Cardiac septum (tissue), 1 donor: ENCODE measurements at regions of chr1 and their contacts with region 1.

Region 1: GRCh38 chr1:205591522-205592351 is 40.1 kb downstream of the ELK4 start:
- DNase-seq: peak; percentile 93

Region 2: DNA sequence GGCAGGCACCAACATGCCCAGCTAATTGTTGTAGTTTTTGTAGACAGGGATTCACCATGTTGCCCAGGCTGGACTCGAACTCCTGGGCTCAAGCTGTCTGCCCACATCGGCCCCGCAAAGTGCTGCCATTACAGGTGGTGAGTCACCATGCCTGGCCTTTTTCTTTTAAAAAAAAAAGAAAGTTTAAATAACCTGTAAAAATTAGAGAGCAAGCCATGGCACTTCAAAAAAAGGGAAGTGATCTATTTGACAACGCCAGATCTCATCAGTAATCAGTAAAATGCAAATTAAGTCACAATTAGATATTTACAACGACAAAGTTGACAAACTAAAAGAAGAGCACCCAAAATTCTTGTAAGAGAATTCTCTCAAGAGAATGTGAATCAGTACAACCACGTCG is 467.0 kb before region 1 on chr1:
- intact Hi-C with region 1: no loop called
- DNase-seq: no peak

Region 3: DNA sequence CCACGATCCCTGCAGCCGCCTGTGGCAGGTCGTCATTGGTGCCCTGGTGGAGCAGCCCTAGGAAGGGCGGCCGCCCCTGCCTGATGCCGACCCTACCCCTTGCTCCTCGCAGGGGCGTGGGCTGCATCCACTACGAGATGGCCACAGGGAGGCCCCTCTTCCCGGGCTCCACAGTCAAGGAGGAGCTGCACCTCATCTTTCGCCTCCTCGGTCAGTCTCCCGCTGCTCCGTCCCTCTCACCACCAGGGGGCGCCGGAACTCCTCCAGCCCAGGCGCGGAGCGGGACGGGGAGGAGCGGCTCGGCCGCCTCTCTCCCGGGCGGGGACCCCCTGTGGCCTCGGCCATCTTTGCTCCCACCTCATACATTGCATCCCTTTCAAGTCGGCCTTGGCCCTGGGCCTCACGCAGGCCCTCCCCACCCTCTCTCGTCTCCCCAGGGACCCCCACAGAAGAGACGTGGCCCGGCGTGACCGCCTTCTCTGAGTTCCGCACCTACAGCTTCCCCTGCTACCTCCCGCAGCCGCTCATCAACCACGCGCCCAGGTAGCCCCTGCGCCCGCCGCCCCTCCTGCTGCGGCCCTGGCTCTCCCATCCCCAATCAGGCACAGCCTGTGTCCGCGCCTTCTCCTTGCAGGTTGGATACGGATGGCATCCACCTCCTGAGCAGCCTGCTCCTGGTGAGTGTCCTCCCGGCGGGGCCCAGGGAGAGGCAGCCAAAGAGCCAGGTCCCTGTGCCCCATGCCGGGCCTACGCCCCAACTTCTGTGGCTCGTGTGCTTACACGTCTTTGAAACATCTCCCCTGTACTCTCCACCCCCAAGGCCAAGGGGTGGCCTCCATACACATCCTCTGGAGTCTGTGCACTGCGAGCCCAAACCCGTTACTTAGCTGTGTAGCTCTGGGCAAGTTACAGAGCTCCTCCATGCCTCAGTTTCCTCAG is 62.6 kb before region 1 on chr1:
- intact Hi-C with region 1: loop called (anchors 2 kb)
- DNase-seq: peak; percentile 89

Region 4: DNA sequence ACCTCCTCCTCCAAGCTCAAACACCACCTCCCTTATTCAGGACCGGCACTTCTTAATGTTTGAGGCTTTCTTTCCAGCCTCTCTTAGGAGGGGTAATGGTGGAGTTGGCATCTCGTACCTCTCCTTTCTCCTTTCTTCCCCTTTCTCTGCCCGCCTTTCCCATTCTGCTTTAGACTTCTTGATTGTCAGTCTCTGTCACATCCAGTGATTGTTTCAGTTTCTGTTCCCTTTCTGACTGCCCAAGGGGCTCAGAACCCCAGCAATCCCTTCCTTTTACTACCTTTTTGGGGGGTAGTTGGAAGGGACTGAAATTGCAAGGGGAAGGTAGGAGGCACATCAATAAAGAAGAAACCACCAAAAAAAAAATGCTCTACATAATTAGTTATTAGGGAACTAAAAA is 34.5 kb after region 1 on chr1:
- intact Hi-C with region 1: no loop called
- DNase-seq: no peak

Region 5: DNA sequence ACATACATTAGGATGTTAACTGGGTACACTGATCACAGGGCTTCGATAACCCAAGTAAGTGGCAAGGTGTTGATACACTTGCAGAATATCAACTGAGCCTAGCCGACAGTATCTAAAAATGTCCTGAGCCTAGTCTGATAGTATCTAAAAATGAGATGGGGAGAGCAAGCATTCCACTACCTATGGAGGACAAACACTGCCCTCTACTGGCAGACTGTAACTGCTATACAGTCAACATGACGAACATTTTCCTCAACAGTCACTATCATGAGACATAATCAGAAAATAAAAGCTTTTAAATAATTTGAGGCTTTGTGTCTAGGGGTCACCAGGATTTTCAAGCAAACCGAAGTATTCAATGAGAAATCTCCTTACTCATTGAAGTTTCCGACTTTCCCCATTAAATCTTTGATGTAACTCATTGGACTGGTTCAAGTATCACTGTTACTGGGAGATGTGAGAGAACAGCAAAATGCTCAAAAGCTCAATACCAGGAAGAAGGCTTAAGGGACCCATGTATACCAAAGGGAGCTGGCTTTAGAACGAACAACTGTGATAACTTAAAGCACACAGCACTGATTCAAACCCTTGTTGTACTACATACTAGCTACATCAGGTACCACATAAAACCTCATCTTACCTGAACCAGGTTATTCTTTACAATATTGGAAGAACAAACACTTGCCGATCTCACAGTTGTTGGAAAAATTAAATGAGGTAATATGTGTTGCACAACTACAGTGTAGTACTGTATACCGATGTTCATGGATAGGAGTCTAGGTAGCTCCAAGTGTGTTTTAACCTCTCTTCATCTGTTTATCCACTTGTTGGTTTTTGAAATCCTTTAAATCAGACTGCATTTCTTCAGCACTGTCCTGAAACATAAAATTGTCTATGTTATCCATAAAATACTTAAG is 119.6 kb after region 1 on chr1:
- intact Hi-C with region 1: loop called (anchors 5 kb)
- DNase-seq: no peak